ENCODE measurements at regions of chr14 and their contacts with region 1.

Region 1: DNA sequence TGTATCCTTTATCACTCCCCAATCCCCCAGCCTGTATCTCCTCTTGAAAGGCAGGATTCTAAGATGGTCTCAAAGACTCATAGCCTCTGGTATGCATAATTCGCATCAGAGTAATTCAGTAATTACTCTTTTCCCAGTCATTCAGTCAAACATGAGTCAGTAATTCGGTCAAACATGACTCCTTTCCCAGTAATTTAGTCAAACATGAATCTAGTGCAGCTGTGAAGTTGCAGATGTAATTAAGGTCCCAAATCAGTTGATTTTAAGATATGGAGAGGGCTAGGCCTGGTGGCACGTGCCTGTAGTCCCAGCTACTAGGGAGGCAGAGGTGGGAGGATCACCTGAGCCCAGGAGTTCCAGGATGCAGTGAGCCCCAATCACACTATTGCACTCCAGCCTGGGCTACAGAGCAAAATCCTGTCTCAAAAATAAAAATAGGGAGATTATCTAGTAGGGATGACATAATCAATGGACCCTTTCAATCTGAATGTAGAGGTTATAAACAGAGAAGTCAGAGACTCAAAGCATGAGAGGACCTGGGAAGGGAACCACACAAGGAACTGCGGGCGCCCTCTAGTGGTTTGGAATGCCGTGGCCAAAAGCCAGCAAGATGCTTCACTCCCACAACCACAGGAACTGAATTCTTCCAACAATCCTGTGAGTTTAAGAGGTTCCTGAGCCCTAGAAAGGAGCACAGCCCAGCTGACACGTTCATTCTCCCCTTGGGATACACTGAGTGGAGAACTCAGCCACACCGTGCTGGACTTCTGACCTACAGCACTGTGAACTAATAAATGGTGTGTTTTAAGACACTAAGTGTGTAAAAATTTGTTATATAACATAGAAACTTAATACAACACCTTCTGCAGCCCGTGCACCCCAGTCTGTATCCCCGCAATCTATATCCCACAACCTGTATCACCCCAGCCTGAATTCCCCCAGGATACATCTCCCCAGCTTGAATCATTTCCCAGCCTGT is 14.3 kb upstream of the ARMH4 start:
- DNase-seq: peak; percentile 82
- H3K4me3 ChIP-seq: no peak overlapping the region
- H3K27ac ChIP-seq: no peak overlapping the region
- H3K4me1 ChIP-seq: peaks cover 5% of the 10 kb centered on the region
- H3K27me3 ChIP-seq: no peaks in the 10 kb centered on the region
- CTCF ChIP-seq: peak; percentile 93

Region 2: DNA sequence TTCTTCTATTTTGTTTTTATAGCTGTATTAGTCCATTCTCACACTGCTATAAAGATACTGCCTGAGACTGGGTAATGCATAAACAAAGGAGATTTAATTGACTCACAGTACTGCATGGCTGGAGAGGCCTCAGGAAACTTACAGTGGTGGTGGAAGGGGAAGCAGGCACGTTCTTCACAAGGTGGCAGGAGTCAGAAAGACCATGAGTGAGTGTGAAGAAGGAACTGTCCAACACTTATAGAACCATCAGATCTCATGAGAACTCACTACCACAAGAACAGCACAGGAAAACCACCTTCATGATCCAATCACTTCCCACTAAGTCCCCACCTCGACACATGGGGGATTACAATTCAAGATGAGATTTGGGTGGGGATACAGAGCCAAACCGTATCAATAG is 56.5 kb before region 1 on chr14:
- intact Hi-C with region 1: loop called (anchors 5 kb)
- DNase-seq: no peak
- H3K4me3 ChIP-seq: no peak overlapping the region
- H3K27ac ChIP-seq: no peak overlapping the region
- H3K4me1 ChIP-seq: peaks cover 11% of the 10 kb centered on the region
- H3K27me3 ChIP-seq: no peaks in the 10 kb centered on the region
- CTCF ChIP-seq: no peak